ENCODE measurements at regions of chr12 and their contacts with region 1.

Region 1: DNA sequence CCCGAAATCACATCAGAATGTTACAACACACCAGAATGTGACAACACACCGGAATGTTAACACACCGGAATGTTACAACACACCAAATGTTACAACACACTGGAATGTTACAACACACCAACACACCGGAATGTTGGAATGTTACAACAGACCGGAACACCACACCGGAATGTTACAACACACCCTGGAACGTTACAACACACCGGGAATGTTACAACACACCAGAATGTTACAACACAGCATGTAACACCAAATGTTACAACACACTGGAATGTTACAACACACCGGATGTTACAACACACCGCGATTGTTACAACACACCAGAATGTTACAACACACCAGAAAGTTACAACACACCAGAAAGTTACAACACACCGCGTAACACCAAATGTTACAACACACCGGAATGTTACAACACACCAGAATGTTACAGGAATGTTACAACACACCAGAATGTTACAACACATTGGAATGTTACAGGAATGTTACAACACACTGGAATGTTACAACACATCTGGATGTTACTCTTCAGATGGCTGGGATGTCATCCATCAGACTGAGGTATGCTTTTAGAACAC is 21.1 kb downstream of the CHFR start:
- DNase-seq: no peak
- ATAC-seq: no peak
- H3K4me3 ChIP-seq: no peak overlapping the region
- H3K4me3 Mint-ChIP-seq: no peak overlapping the region
- H3K27ac ChIP-seq: no peak overlapping the region
- H3K27ac Mint-ChIP-seq: peak overlapping the region; percentile 89
- H3K4me1 ChIP-seq: peaks cover 12% of the 10 kb centered on the region
- H3K4me1 Mint-ChIP-seq: peaks cover 32% of the 10 kb centered on the region
- H3K27me3 ChIP-seq: no peaks in the 10 kb centered on the region
- H3K27me3 Mint-ChIP-seq: no peaks in the 10 kb centered on the region
- CTCF ChIP-seq: no peak

Region 2: GRCh38 chr12:132834181-132834711 is 32.1 kb before region 1 on chr12:
- CTCF ChIA-PET with region 1: no interaction called
- POLR2A ChIA-PET with region 1: interaction called, 9 read pairs
- intact Hi-C with region 1: loop called (anchors 5 kb)
- DNase-seq: peak in 10 of 14 experiments; percentile 6 to 64 (median 26)
- ATAC-seq: peak; percentile 78
- H3K4me3 ChIP-seq: no peak overlapping the region
- H3K4me3 Mint-ChIP-seq: peak overlapping the region; percentile 82
- H3K27ac ChIP-seq: peak overlapping the region; percentile 25 to 38
- H3K27ac Mint-ChIP-seq: peak overlapping the region; percentile 96
- H3K4me1 ChIP-seq: peaks cover 42% of the 10 kb centered on the region
- H3K4me1 Mint-ChIP-seq: peaks cover 45% of the 10 kb centered on the region
- H3K27me3 ChIP-seq: no peaks in the 10 kb centered on the region
- H3K27me3 Mint-ChIP-seq: no peaks in the 10 kb centered on the region
- CTCF ChIP-seq: no peak

Region 3: DNA sequence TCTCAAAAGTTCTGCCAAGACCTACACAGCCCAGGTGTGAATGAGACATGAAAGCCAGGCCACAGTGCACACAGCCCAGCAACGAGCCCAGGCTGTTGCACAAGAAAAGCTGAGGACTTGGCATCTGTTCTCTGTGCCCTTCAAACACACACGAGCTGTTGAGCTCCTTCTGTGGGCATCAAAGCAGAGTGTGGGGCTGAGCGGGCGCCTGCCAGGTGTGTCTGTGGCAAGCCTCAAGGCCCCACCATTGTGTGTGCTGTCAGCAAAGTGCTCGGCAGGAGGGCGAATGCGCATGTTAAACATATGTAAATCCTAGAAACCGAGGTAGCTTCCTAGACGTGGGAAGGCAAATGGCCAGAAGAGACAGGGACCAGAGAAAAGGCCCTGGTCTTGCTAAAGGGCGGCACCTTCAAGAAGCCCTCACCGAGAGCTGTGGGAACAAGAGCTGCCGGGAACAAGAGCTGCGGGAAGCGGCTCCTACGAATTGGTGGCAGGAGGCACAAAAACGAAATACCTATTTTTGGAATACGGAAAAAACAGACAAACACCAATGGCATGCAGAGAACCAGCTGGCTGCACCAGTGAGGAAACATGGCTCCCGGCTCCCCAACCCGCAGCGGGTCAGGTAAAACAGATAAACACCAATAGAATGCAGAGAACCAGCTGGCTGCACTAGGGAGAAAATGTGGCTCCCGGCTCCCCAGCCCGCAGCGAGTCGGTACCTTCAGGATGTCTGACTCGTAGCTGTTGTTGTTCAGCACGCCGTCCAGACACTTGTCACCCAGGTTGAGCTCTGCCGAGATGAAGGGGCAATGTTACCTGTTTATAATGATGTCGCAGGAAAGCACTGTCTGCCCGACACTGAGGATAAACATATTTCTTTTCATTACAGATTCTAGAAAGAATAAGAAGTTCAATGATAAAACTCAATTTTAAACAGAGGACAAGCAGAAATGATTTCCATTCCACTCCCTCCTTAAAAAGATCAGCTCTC is 18.7 kb before region 1 on chr12:
- CTCF ChIA-PET with region 1: no interaction called
- POLR2A ChIA-PET with region 1: interaction called, 10 read pairs
- intact Hi-C with region 1: no loop called
- DNase-seq: peak in 4 of 14 experiments; percentile 26 to 36 (median 32)
- ATAC-seq: peak; percentile 82
- H3K4me3 ChIP-seq: no peak overlapping the region
- H3K4me3 Mint-ChIP-seq: peak overlapping the region; percentile 20
- H3K27ac ChIP-seq: peak overlapping the region in 1 of 2 donors; percentile 44
- H3K27ac Mint-ChIP-seq: peak overlapping the region; percentile 87
- H3K4me1 ChIP-seq: no peaks in the 10 kb centered on the region
- H3K4me1 Mint-ChIP-seq: peaks cover 17% of the 10 kb centered on the region
- H3K27me3 ChIP-seq: no peaks in the 10 kb centered on the region
- H3K27me3 Mint-ChIP-seq: no peaks in the 10 kb centered on the region
- CTCF ChIP-seq: no peak